H1 (cell line): ENCODE measurements at regions of chr12 and their contacts with region 1.

Region 1: DNA sequence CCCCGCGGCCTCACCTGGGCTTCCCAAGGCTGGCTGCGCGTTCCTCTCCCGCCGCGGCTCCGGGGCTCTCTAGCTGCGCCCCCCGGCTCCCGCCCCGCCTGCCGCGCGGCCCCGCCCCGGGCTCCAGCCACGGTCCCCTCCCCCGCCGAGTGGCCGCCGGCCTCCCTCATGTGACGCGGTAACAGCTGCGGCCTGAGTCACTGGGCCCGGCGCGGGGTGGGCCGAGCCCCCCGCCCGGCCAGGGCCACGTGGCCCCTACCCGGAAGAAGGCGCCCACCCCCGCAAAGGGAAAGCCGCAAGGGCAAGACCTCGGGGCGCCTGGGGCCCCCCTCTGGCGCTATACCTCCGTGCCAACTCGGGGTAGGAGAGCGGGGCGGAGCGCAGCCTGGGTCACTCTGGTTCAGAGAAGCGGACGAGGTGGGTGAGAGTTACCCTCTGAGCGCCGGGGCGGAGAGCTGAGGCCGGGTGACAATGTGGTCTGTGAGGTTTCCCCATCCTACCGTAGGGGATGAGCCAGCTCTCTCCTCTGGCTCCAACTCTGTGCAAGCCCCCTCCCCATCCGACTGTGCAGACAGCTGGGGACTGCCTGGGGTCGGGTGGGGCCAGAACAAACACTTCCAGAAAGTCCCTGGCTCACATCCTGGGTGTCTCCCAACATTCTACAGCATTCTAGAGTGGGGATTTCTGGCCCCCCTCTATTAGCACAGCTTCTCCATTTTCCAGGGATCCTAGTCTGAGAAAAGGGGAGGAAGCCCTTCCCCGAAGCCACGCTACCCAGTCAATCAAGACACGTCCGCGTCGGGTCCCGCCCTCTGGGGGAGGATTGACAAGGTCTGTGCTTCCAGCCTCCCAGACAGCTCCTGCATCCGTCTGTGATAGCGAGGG is at the start of gene CD63:
- DNase-seq: peak in 1 of 2 experiments; percentile 85
- H3K4me3 ChIP-seq: peak within 1 kb of the TSS; percentile 54 to 93 (median 90)
- H3K27ac ChIP-seq: peak within 1 kb of the TSS; percentile 68; the same call in 1 of the 2 replicates
- H3K4me1 ChIP-seq: peaks cover 0 to 12% (median 10%) of the 10 kb centered on the region in 4 experiments; a peak in 6 of 7 replicates
- H3K27me3 ChIP-seq: no peaks in the 10 kb centered on the region
- CTCF ChIP-seq: no peak
- EP300 ChIP-seq: 0 out of 3 replicates have a peak, but pooled peaks of 1 of the 2 experiments have one; percentile 7
- POLR2A ChIP-seq: peak; percentile 57 to 74; a peak in 2 of 3 replicates
- RAD21 ChIP-seq: no peak
- total RNA-seq, gene CD63: 440 and 460 TPM in 2 replicates

Region 2: GRCh38 chr12:55607821-55608594 is 121.2 kb before region 1 on chr12:
- CTCF ChIA-PET with region 1: no interaction called
- POLR2A ChIA-PET with region 1: no interaction called
- DNase-seq: no peak
- H3K4me3 ChIP-seq: no peak overlapping the region
- H3K27ac ChIP-seq: no peak overlapping the region
- H3K4me1 ChIP-seq: no peaks in the 10 kb centered on the region
- H3K27me3 ChIP-seq: no peaks in the 10 kb centered on the region
- CTCF ChIP-seq: no peak
- EP300 ChIP-seq: no peak
- POLR2A ChIP-seq: no peak
- RAD21 ChIP-seq: no peak

Region 3: GRCh38 chr12:55707841-55708694 is 21.1 kb before region 1 on chr12 and contains the start of gene ITGA7:
- CTCF ChIA-PET with region 1: interaction called, 32 read pairs
- POLR2A ChIA-PET with region 1: interaction called, 21 read pairs
- DNase-seq: peak; percentile 83 to 99
- H3K4me3 ChIP-seq: peak within 1 kb of the TSS; percentile 83 to 88 (median 86)
- H3K27ac ChIP-seq: 0 out of 2 replicates have a peak within 1 kb of the TSS, but pooled peaks have one; percentile 54
- H3K4me1 ChIP-seq: peaks cover 0 to 25% (median 8%) of the 10 kb centered on the region in 4 experiments; a peak in 5 of 7 replicates
- H3K27me3 ChIP-seq: peaks cover 0 to 3% (median 0%) of the 10 kb centered on the region in 4 experiments; a peak in 5 of 7 replicates
- CTCF ChIP-seq: no peak
- EP300 ChIP-seq: no peak
- POLR2A ChIP-seq: no peak
- RAD21 ChIP-seq: no peak
- total RNA-seq, gene ITGA7: 76.4 and 86.1 TPM in 2 replicates

Region 4: DNA sequence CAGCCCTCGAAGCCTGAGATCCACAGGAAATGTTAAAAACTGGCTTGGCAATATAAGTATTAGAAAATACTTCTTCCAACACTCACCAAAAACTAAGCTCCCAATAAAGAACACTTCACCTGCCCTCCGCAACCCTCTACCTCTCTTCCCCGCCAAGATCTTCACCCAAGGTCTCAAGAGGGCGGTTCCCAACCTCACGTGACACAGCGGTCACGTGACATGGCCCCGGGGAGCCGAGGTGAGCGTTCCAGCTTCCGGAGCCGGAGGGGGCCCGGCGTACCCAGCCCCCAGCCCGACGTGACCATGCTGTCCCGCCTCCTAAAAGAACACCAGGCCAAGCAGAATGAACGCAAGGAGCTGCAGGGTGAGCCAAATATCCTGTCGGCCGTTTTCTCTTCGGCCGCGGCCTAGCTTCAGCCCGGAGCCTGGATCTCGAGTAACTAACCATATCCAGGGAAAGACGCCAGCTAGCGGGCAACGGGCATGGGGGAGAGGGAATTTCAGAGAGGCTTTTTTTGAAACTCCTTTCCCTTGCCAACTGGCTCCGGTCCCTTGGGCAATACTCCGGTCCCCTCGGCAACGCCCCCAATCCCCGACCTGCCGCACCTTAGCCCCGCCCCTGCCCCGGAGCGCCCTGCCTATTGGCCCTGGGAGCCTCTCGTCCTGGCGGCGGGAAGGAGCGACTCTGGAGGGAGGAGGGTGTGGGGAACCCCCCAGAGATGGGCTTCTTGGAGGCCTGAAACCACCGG is 13.2 kb before region 1 on chr12 and contains the start of gene BLOC1S1:
- CTCF ChIA-PET with region 1: interaction called, 229 read pairs
- POLR2A ChIA-PET with region 1: interaction called, 103 read pairs
- DNase-seq: peak in 1 of 2 experiments; percentile 98
- H3K4me3 ChIP-seq: peak within 1 kb of the TSS; percentile 77 to 95 (median 87)
- H3K27ac ChIP-seq: peak within 1 kb of the TSS; percentile 63
- H3K4me1 ChIP-seq: peaks cover 10 to 26% (median 19%) of the 10 kb centered on the region in 4 experiments
- H3K27me3 ChIP-seq: no peaks in the 10 kb centered on the region; a peak in 2 of 7 replicates
- CTCF ChIP-seq: no peak
- EP300 ChIP-seq: peak in 1 of 2 experiments; percentile 85; a peak in 1 of 3 replicates
- POLR2A ChIP-seq: peak; percentile 2 to 64
- RAD21 ChIP-seq: no peak
- total RNA-seq, gene BLOC1S1: 84.3 and 91.1 TPM in 2 replicates

Region 5: GRCh38 chr12:55745361-55746146 is 16.4 kb after region 1 on chr12:
- CTCF ChIA-PET with region 1: interaction called, 229 read pairs
- POLR2A ChIA-PET with region 1: interaction called, 809 read pairs
- DNase-seq: peak in 1 of 2 experiments; percentile 77
- H3K4me3 ChIP-seq: peak overlapping the region; percentile 80 to 99 (median 92)
- H3K27ac ChIP-seq: peak overlapping the region; percentile 48; the same call in 1 of the 2 replicates
- H3K4me1 ChIP-seq: peaks cover 8 to 37% (median 23%) of the 10 kb centered on the region in 4 experiments
- H3K27me3 ChIP-seq: no peaks in the 10 kb centered on the region
- CTCF ChIP-seq: no peak
- EP300 ChIP-seq: peak in 1 of 2 experiments; percentile 23; a peak in 1 of 3 replicates
- POLR2A ChIP-seq: peak in 1 of 2 experiments; percentile 19; a peak in 1 of 3 replicates
- RAD21 ChIP-seq: no peak

Region 6: DNA sequence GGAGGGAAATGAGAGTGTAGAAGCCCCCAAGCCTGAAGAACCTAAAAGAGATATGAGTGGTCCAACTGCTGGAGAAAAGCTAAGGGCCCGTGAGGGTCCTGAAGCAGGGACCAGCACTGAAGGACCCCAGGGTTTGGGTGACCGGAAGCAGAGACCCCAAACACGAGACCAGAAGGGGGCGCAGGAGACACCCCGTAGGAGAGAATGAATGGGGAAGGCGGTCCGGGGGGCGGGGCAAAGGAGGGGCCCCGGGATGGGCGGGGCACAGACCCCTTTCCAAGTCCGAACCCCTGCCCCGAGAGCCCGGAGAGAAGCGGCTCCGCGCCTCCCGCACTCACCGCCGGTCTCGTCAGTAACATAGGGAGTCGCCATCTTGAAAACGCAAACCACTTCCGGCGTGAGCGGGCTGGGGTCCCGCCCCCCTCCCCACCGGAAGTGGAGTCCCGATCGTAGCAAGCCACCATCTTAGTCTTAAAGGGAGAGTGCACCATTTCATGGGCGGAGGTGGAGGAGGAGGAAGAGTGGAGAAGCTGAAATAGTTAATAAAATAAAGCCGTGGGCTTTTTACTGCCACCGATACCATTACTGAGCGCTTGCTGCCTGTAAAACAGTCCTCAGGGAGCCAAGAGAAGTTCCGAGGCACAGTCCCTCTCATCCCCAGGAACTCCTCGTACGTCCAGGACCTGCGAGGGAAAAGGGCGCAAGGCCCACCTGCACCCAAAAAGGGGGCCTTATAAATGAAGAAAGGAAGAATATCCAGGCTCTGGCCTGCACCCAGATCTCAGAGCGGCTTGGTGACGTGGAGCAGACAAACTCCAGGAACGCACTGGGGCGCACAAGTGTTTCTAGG is 197.8 kb after region 1 on chr12:
- CTCF ChIA-PET with region 1: interaction called, 4 read pairs
- POLR2A ChIA-PET with region 1: interaction called, 10 read pairs
- DNase-seq: peak; percentile 84 to 94
- H3K4me3 ChIP-seq: peak overlapping the region; percentile 90 to 100 (median 94)
- H3K27ac ChIP-seq: peak overlapping the region; percentile 84
- H3K4me1 ChIP-seq: peaks cover 8 to 19% (median 11%) of the 10 kb centered on the region in 4 experiments; a peak in 6 of 7 replicates
- H3K27me3 ChIP-seq: peaks cover 0 to 6% (median 1%) of the 10 kb centered on the region in 4 experiments; a peak in 2 of 7 replicates
- CTCF ChIP-seq: peak; percentile 51 to 66 (median 59)
- EP300 ChIP-seq: no peak
- POLR2A ChIP-seq: peak in 1 of 2 experiments; percentile 39; a peak in 2 of 3 replicates
- RAD21 ChIP-seq: peak; percentile 23 to 35; a peak in 3 of 4 replicates